BJ (cell line): ENCODE measurements at regions of chr6 and their contacts with region 1.

Region 1: DNA sequence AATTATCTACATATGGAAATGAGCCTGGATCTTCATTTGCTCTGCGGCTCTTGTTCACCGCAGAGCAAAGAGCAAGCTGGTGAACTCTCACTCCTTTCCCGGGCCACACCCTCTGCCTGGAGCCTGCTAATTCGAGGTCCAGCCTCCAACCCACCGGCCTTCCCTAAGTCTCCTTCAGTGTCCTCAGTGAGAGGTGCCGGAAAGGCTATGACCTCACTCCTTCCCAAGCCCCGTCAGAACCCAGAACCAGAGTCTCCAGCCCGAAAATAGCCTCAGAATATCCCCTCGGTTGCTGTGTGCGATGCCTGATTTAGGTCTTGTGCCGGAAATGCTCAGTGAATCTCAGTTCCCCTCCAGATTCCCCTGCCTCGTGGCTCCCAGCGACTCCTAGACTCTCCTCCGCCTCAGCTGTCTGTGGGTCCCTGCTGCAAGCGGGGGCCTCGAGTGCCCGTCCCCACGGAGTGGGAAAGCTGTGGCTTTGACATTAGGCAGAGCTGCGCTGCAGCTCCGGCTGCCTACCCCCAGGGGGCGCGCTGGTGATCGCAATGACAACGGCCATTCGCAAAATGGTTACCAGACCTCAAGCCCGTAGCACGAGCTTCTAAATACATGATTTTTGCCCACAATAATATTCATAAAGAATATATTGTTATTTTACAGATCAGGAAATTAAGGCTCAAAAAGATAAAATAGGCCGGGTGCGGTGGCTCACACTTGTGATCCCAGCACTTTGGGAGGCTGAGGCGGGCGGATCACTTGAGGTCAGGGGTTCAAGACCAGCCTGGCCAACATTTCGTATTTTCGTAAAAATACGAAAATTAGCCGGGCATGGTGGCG is 4.1 kb upstream of the BNIP5 start:
- DNase-seq: no peak
- H3K4me3 ChIP-seq: peak overlapping the region; percentile 28
- H3K27me3 ChIP-seq: peaks cover 29% of the 10 kb centered on the region
- CTCF ChIP-seq: peak; percentile 99

Region 2: DNA sequence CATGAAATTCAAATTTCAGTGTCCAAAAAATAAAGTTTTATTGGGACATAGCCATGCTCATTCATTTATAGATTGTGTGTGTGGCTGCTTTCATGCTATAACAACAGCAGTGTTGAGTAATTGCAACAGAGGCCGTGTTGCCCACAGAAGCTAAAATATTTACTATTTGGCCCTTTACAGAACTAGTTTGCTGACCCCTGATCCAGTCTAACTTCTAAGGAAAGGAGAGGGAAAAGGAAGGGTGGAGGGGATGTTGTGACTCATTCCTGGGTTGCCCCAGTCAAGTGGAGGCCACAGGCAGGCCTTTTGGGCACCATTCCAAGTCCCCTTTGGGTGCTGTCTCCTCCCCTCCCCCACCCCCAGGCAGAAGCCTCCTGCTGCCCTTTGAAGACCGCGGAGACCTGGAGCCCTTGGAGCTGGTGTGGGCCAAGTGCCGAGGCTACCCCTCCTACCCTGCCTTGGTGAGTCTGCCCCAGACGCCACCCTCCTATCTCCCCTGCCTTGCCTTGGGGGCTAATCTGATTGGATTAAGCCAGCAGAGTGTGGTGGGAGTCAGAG is 115.9 kb before region 1 on chr6:
- CTCF ChIA-PET with region 1: no interaction called
- POLR2A ChIA-PET with region 1: no interaction called
- DNase-seq: no peak
- H3K4me3 ChIP-seq: no peak overlapping the region
- H3K27me3 ChIP-seq: no peaks in the 10 kb centered on the region
- CTCF ChIP-seq: no peak

Region 3: GRCh38 chr6:36309203-36309602 is 31.6 kb before region 1 on chr6:
- CTCF ChIA-PET with region 1: interaction called, 11 read pairs
- POLR2A ChIA-PET with region 1: no interaction called
- DNase-seq: no peak
- H3K4me3 ChIP-seq: no peak overlapping the region
- H3K27me3 ChIP-seq: peaks cover 16% of the 10 kb centered on the region
- CTCF ChIP-seq: no peak

Region 4: DNA sequence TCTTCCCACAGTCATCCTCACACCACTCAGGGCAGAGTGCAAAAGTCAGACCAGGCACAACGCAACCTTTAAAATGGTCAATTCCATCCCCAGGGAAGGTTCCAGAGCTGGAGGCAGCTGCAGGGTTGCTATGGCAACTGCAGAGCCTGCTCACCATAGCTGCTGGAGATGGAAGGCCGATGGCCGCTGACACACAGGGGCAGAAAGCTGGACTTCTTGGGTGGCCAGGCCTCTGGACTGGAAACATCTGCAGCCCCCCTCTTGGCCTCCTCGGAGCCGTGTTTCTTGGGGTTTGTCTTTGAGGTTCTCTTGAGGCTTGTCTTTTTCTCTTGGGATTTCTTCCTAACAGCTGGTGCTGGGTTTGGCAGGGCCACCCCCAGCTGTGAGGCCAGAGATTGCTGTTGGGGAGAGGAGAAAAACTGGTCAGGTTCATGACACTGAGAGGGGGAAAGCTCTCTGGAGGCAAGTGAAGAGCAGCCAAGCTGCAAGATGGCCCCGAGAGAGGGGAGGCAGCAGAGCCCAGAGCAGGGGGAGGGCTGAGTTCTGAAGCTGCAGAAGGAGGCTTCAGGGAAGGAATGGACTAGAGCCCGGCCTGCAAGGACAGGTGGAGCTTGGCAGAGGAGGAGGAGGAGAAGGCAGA is 14.4 kb before region 1 on chr6:
- CTCF ChIA-PET with region 1: interaction called, 20 read pairs
- POLR2A ChIA-PET with region 1: no interaction called
- DNase-seq: no peak
- H3K4me3 ChIP-seq: no peak overlapping the region
- H3K27me3 ChIP-seq: peaks cover 32% of the 10 kb centered on the region
- CTCF ChIP-seq: no peak

Region 5: DNA sequence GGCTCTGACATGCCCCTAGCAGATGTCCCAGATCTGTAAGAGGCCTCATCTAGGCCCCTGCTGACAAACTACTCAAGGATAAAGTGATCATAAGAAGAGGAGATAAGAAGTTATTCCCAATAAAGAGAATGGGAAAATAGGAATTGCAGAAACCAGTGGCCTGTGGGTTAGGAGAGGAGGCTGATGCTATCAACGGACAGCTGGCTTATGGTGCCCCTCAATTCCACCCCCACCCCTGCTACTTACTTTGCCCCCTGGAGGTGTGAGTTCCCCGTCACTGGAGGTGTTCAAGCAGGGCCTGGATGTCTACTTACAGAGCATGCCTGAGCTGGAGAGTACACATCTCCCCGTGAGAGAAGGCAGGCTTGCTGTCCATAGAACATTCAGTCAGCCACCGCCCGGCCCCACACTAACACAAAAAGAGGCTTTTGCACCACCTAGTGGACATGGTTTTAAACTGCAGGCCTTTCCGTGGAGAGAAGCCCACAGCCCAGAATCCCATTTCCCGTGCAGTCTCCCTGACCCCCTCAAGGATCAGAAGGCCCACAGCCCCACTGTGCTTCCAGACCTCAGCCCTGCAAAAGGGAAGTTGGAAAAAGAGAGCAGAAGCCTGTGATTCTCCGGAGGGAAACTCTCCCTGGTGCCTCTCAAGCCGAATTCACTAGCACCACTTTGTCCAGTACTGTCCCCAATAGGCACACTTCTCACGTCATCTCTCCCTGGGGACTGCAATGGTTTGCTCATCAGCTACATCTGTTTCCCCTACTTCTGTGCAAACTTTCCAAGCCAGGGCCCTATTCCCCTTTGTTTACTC is 19.6 kb after region 1 on chr6:
- CTCF ChIA-PET with region 1: interaction called, 132 read pairs
- POLR2A ChIA-PET with region 1: no interaction called
- DNase-seq: no peak
- H3K4me3 ChIP-seq: no peak overlapping the region
- H3K27me3 ChIP-seq: peaks cover 1% of the 10 kb centered on the region; the same call in 1 of the 2 replicates
- CTCF ChIP-seq: peak; percentile 83

Region 6: DNA sequence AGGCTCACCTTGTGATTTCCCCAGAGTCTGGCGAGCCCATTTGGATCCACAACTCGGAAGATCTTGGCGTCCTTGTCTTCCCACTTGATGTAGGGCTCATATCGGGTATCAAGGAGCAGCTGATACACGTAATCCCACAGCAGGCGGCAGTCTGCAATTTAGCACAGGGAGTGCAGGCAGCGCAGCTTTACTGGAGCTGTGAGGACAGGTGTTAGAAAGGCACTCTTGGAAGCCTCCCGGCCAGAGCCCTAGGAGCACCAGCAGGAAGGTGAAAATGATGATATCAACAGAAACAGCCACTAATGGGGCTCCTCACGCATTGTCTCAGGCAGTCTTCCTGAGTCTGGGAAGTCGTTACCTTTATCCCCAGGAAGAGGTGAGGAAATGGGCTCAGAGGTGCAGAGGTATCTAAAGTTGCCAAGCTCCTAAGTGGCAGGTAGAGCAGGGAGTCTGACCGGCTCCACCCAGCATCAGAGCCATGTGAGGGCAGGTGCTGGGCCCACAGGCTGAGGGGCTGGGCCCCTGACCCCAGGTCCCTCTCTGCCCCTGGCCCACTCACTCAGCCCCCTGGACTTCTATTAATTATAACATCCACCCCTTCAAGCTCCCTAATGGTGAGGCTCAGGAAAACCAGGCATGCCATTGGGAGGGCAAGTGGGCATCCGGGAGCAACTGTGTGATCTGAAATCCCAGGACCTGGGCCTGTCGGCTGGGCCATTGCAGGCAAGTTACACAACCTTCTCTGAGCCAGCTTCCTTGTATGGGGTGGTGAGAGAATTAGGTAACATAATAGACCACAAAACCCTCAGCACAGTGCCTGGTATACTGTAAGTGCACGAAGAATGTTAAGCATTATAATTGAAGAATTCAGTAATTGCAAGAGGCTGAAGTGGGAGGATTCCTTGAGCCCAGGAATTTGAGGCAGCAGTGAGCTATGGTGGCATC is 28.4 kb after region 1 on chr6:
- CTCF ChIA-PET with region 1: interaction called, 12 read pairs
- POLR2A ChIA-PET with region 1: no interaction called
- DNase-seq: peak; percentile 92
- H3K4me3 ChIP-seq: no peak overlapping the region
- H3K27me3 ChIP-seq: no peaks in the 10 kb centered on the region; the same call in none of the 2 replicates
- CTCF ChIP-seq: no peak